A673 (cell line): ENCODE measurements at regions of chr1 and their contacts with region 1.

Region 1: DNA sequence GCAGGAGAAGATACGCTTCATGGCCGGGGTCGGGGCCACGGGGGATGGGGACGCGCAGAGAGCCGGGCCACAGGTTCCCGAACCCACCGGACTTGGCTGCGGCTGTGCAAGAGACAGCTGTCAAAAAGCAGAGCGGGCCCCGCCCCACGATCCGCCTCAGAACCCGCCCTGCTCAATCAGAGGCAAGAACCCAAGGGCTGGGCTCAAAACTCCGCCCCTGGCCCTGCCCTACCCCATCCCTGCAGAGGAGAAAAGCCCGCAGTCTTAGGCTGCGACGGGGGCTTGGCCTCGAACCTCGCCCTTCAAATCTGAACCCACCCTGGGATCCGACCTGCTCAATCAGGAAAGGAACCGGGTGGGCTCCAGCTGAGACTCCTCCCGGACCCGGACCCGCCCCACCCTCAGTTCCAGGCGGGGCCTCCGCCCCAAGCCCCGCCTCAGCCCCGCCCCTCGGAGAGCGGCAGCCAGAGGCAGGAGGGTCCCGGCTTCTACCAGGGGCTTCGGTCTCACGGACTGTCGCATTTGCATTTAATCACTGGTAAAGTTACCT is at the start of gene ANKRD35:
- DNase-seq: peak; percentile 90
- H3K4me3 ChIP-seq: peak within 1 kb of the TSS; percentile 69
- H3K27ac ChIP-seq: no peak within 1 kb of the TSS
- H3K4me1 ChIP-seq: peaks cover 2% of the 10 kb centered on the region
- H3K27me3 ChIP-seq: peaks cover 22% of the 10 kb centered on the region
- CTCF ChIP-seq: no peak
- total RNA-seq, gene ANKRD35: not detected in 2 replicates

Region 2: DNA sequence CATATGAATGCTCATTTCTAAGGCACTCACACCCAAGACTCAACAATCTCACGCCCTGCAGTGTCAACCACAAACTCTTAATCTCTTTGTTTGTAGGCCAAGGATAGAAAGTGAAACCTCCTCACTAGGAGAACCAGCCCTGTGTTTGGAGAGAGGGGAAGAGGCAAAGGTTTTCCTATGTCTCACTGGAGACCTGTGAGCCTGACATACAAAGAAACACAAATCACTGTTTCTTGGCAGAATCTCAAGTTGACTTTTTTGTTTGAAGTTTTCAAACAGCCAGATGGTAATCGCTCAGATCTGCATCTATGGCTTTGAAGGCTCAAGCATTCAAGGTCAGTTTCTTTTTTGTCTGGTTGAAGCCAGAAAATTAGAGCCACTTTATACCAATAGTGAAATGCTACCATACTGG is 195.2 kb before region 1 on chr1:
- CTCF ChIA-PET with region 1: no interaction called
- POLR2A ChIA-PET with region 1: no interaction called
- intact Hi-C with region 1: no loop called
- DNase-seq: peak; percentile 13
- H3K4me3 ChIP-seq: no peak overlapping the region
- H3K27ac ChIP-seq: no peak overlapping the region
- H3K4me1 ChIP-seq: no peaks in the 10 kb centered on the region
- H3K27me3 ChIP-seq: no peaks in the 10 kb centered on the region
- CTCF ChIP-seq: no peak

Region 3: DNA sequence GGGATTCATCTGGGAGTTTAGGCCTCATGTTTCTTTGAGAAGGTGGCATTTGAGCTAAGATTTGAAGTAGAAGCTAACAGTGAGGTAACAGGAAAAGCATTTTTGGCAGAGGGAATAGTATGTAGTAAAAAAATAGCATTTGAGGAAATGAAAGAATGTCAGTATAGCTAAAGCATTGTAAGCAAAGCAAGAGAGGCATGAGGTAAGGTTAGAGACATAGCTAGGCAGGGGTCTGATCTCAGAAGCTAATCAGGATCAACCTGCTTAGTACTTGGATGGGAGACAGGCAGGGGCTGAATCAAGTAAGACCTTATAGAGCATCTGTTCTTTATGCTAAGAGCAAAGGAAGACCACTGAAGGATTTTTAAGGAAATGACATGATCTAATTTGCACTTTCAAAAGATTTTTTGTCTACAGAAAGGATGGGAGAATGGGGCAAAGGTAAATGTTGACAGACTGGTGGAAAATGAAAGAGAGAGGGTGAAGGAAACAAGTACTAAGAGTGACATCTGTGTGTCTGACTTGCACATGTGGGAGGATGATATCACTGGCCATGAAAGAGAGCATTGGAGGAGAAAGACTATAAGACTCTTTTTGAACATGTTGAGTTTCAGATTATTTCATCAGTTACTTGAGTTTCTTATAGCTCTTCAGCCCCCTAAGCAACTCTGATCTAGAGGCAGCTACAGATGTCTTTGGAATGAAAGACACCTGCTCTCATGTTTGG is 57.7 kb before region 1 on chr1:
- CTCF ChIA-PET with region 1: no interaction called
- POLR2A ChIA-PET with region 1: no interaction called
- intact Hi-C with region 1: no loop called
- DNase-seq: no peak
- H3K4me3 ChIP-seq: no peak overlapping the region
- H3K27ac ChIP-seq: peak overlapping the region; percentile 27
- H3K4me1 ChIP-seq: peaks cover 10% of the 10 kb centered on the region
- H3K27me3 ChIP-seq: no peaks in the 10 kb centered on the region
- CTCF ChIP-seq: no peak

Region 4: GRCh38 chr1:145845514-145846161 is 40.2 kb before region 1 on chr1 and contains the start of gene NUDT17:
- CTCF ChIA-PET with region 1: no interaction called
- POLR2A ChIA-PET with region 1: interaction called, 7 read pairs
- intact Hi-C with region 1: loop called (anchors 5 kb)
- DNase-seq: peak; percentile 88
- H3K4me3 ChIP-seq: peak within 1 kb of the TSS; percentile 74
- H3K27ac ChIP-seq: peak within 1 kb of the TSS; percentile 85
- H3K4me1 ChIP-seq: peaks cover 12% of the 10 kb centered on the region
- H3K27me3 ChIP-seq: no peaks in the 10 kb centered on the region
- CTCF ChIP-seq: peak; percentile 98
- total RNA-seq, gene NUDT17: 3.4 and 6.6 TPM in 2 replicates

Region 5: GRCh38 chr1:145871994-145872924 is 13.6 kb before region 1 on chr1:
- CTCF ChIA-PET with region 1: no interaction called
- POLR2A ChIA-PET with region 1: no interaction called
- intact Hi-C with region 1: no loop called
- DNase-seq: no peak
- H3K4me3 ChIP-seq: no peak overlapping the region
- H3K27ac ChIP-seq: no peak overlapping the region
- H3K4me1 ChIP-seq: no peaks in the 10 kb centered on the region
- H3K27me3 ChIP-seq: no peaks in the 10 kb centered on the region
- CTCF ChIP-seq: no peak